GM10248 (cell line): ENCODE measurements at regions of chr18 and their contacts with region 1.

Region 1: GRCh38 chr18:21167630-21168377 is 56.2 kb upstream of the ROCK1 start:
- DNase-seq: no peak
- CTCF ChIP-seq: no peak

Region 2: DNA sequence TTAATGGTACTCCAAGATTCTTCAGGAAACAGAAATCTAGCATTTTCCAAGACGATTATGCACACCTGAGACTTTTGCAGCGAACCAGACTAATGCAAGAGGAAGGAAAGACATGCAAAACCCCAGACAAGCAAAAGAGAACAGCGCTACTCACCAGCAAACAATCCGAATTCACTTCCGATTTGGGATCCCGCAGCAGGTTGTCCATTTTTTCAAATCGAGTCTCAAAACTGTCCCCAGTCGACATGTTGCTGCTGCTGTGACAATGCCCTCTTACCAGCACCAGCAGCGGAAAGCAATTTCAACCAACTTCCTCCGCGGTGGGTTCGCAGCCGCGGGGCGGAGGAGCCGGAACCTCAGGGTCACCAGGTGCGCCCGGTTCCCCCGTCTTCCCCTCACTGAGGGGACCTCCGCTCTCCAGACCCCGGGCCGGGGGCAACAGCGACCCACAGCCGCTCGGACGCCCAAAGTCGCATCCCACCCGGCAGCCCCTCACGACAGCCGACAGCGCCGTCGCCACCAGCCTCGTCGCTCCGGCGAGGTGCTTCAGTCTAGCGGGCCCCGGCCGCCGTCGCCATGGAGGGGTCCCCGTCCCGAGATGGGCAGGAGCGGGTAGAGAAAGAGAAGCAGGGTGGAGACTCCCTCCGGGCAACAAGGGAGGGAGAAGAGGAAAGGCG is 57.0 kb before region 1 on chr18:
- CTCF ChIA-PET with region 1: no interaction called
- POLR2A ChIA-PET with region 1: no interaction called
- DNase-seq: peak; percentile 38
- CTCF ChIP-seq: no peak

Region 3: DNA sequence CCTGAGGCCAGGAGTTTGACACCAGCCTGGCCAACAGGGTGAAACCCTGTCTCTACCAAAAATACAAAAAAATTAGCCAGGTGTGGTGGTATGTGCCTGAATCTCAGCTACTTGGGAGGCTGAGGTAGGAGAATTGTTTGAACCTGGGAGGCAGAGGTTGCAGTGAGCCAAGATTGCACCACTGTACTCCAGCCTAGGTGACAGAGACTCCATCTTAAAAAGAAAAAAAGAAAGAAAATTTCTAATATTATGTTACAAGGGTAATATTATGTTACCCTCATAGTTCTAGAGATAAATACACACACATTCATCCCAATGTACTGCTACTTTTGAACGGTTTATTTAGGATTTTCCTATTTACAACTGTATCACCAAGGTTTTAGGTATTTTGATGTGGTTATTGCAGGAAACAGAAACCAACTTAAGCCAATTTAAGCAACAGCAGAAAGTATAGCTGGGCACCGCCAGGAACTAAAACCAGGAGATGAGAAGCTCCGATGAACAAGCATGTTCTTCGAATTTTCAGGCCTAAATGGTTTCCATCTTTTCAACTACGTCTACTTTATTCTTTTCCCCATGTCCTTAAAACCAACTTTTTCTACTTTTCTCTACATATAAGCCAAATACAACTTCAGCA is 44.4 kb before region 1 on chr18:
- CTCF ChIA-PET with region 1: no interaction called
- POLR2A ChIA-PET with region 1: no interaction called
- DNase-seq: no peak
- CTCF ChIP-seq: no peak

Region 4: GRCh38 chr18:21134898-21135297 is 32.9 kb before region 1 on chr18:
- CTCF ChIA-PET with region 1: no interaction called
- POLR2A ChIA-PET with region 1: no interaction called
- DNase-seq: no peak
- CTCF ChIP-seq: peak; percentile 17

Region 5: GRCh38 chr18:21179590-21180220 is 11.9 kb after region 1 on chr18:
- CTCF ChIA-PET with region 1: interaction called, 14 read pairs
- POLR2A ChIA-PET with region 1: no interaction called
- DNase-seq: peak; percentile 63
- CTCF ChIP-seq: peak; percentile 77

Region 6: DNA sequence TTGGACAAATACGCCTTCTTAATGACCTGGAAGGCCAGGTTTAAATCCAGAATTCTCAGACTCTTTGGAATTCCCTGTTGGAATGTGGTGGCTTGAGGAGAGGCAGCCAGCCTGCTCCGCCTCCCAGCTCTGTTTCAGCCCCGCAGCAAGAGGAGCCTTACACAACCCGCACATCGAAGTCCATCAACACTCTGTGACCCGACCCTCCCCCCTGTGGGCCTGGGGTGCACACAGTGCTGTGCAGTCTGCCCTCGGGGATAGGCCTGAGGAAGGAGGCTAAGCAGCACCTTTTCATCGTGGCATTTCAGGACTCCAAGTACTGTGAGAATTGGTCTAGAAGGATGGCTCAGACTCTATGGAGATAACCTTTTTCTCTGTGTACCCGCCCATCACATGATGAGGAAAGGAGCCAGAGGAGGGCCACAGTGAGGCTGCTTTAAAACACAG is 148.0 kb after region 1 on chr18:
- CTCF ChIA-PET with region 1: no interaction called
- POLR2A ChIA-PET with region 1: no interaction called
- DNase-seq: no peak
- CTCF ChIP-seq: no peak